Activated CD4-positive, alpha-beta T cell treated with anti-CD3 and anti-CD28 coated beads for 36 hours (primary cell): ENCODE measurements at regions of chr20 and their contacts with region 1.

Region 1: GRCh38 chr20:36835453-36836198 is 40.3 kb upstream of the TLDC2 start:
- DNase-seq: peak; percentile 94
- ATAC-seq: peak; percentile 98
- H3K4me3 Mint-ChIP-seq: peak overlapping the region; percentile 76
- H3K27ac Mint-ChIP-seq: peak overlapping the region; percentile 85
- H3K4me1 Mint-ChIP-seq: peaks cover 13% of the 10 kb centered on the region
- H3K27me3 Mint-ChIP-seq: no peaks in the 10 kb centered on the region

Region 2: GRCh38 chr20:36709126-36709525 is 126.5 kb before region 1 on chr20:
- CTCF ChIA-PET with region 1: no interaction called
- POLR2A ChIA-PET with region 1: no interaction called
- intact Hi-C with region 1: no loop called
- DNase-seq: no peak
- ATAC-seq: no peak
- H3K4me3 Mint-ChIP-seq: no peak overlapping the region
- H3K27ac Mint-ChIP-seq: no peak overlapping the region
- H3K4me1 Mint-ChIP-seq: no peaks in the 10 kb centered on the region
- H3K27me3 Mint-ChIP-seq: no peaks in the 10 kb centered on the region

Region 3: DNA sequence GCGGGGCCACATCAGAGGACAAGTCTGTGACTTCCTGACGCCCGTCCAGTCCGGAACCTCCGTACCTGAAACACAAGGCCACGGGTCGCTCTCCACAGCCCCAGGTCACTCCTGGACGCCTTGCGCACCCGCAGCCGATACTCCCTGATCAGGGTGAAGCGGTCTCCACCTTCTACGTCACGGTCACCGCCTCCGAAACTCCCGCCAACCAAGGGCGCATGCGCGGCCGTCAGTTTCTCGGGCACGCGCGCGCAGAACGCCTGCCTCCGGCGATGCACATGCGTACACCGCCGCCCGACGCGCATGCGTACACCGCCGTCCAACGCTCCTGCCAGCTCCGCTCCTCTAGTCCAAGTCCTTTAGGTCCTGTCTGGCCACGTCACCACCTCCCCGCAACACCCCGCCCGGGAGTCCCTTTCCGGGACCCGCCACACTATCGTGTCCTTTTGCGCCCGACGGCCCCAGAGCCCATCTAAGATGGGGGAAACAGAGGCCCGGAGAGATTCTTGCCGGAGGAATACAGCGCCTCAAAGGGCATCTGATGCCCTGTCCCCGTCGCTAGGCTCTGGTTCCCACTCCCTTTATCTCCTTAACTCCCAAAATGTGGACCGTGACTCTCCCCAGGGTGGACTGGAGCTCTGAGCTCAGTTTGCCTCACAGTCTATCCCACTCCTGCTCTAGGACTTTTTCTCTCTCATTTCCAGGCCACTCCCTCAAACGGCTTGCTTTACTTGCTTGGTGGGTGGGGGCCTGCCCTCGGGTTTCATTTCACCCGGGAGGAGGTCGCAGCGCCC is 61.8 kb before region 1 on chr20 and contains the start of gene DSN1:
- CTCF ChIA-PET with region 1: interaction called, 16 read pairs
- POLR2A ChIA-PET with region 1: no interaction called
- intact Hi-C with region 1: loop called in 1 of 2 experiments (anchors 1 kb)
- DNase-seq: peak; percentile 99
- ATAC-seq: peak; percentile 91
- H3K4me3 Mint-ChIP-seq: peak within 1 kb of the TSS; percentile 79
- H3K27ac Mint-ChIP-seq: peak within 1 kb of the TSS; percentile 97
- H3K4me1 Mint-ChIP-seq: peaks cover 13% of the 10 kb centered on the region
- H3K27me3 Mint-ChIP-seq: no peaks in the 10 kb centered on the region
- total RNA-seq, gene DSN1: 20.4 to 20.7 TPM

Region 4: GRCh38 chr20:36802326-36803222 is 33.1 kb before region 1 on chr20:
- CTCF ChIA-PET with region 1: no interaction called
- POLR2A ChIA-PET with region 1: no interaction called
- intact Hi-C with region 1: no loop called
- DNase-seq: no peak
- ATAC-seq: no peak
- H3K4me3 Mint-ChIP-seq: no peak overlapping the region
- H3K27ac Mint-ChIP-seq: no peak overlapping the region
- H3K4me1 Mint-ChIP-seq: no peaks in the 10 kb centered on the region
- H3K27me3 Mint-ChIP-seq: no peaks in the 10 kb centered on the region

Region 5: GRCh38 chr20:36856691-36857635 is 21.3 kb after region 1 on chr20:
- CTCF ChIA-PET with region 1: interaction called, 10 read pairs
- POLR2A ChIA-PET with region 1: interaction called, 4 read pairs
- intact Hi-C with region 1: no loop called
- DNase-seq: peak; percentile 64
- ATAC-seq: peak; percentile 80
- H3K4me3 Mint-ChIP-seq: no peak overlapping the region
- H3K27ac Mint-ChIP-seq: peak overlapping the region; percentile 26
- H3K4me1 Mint-ChIP-seq: peaks cover 18% of the 10 kb centered on the region
- H3K27me3 Mint-ChIP-seq: peaks cover 6% of the 10 kb centered on the region

Region 6: GRCh38 chr20:36881888-36882287 is 46.3 kb after region 1 on chr20:
- CTCF ChIA-PET with region 1: interaction called, 13 read pairs
- POLR2A ChIA-PET with region 1: no interaction called
- intact Hi-C with region 1: loop called in 1 of 2 experiments (anchors 1 kb)
- DNase-seq: peak; percentile 37
- ATAC-seq: peak; percentile 94
- H3K4me3 Mint-ChIP-seq: no peak overlapping the region
- H3K27ac Mint-ChIP-seq: no peak overlapping the region
- H3K4me1 Mint-ChIP-seq: peaks cover 8% of the 10 kb centered on the region
- H3K27me3 Mint-ChIP-seq: no peaks in the 10 kb centered on the region

Region 7: DNA sequence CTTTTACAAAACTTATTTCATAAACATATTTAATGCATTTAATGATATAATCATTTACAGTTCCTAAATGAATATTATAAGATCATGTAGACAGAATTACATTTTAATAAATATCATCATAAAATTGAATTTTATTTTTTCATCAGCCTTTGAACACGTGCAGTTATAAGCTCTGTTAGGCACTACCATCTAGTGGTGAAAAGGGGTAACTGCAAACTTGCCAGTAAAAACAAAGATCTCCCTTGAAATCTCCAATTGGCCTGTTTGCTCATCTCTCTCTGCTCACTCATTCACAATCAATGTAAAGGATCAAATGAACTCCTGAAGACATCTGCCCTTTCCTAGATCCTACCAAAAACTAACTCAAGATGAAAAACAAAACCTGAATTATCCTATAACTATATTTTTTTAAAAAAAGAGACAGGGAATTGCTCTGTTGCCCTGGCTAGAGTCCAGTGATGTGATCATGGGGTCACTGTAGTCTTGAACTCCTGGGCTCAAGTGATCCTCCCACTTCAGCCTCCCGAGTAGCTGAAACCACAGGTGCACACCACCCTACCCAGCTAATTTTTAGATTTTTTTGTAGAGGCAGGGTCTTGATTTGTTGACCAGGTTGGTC is 84.2 kb after region 1 on chr20:
- CTCF ChIA-PET with region 1: interaction called, 12 read pairs
- POLR2A ChIA-PET with region 1: no interaction called
- intact Hi-C with region 1: no loop called
- DNase-seq: peak; percentile 35
- ATAC-seq: peak; percentile 77
- H3K4me3 Mint-ChIP-seq: no peak overlapping the region
- H3K27ac Mint-ChIP-seq: peak overlapping the region; percentile 82
- H3K4me1 Mint-ChIP-seq: peaks cover 20% of the 10 kb centered on the region
- H3K27me3 Mint-ChIP-seq: no peaks in the 10 kb centered on the region

Region 8: GRCh38 chr20:37178839-37179670 is 343.4 kb after region 1 on chr20 and contains the starts of genes MROH8 and RPN2:
- CTCF ChIA-PET with region 1: no interaction called
- POLR2A ChIA-PET with region 1: no interaction called
- intact Hi-C with region 1: loop called in 1 of 2 experiments (anchors 5 kb)
- DNase-seq: peak; percentile 98
- ATAC-seq: peak; percentile 97
- H3K4me3 Mint-ChIP-seq: peak within 1 kb of the TSS; percentile 87
- H3K27ac Mint-ChIP-seq: peak within 1 kb of the TSS; percentile 92
- H3K4me1 Mint-ChIP-seq: peaks cover 33% of the 10 kb centered on the region
- H3K27me3 Mint-ChIP-seq: no peaks in the 10 kb centered on the region
- total RNA-seq, gene MROH8: 3.0 to 4.5 TPM
- total RNA-seq, gene RPN2: 103 to 115 TPM